Adrenal gland (tissue), 19 donors: ENCODE measurements at regions of chr7 and their contacts with region 1.

Region 1: DNA sequence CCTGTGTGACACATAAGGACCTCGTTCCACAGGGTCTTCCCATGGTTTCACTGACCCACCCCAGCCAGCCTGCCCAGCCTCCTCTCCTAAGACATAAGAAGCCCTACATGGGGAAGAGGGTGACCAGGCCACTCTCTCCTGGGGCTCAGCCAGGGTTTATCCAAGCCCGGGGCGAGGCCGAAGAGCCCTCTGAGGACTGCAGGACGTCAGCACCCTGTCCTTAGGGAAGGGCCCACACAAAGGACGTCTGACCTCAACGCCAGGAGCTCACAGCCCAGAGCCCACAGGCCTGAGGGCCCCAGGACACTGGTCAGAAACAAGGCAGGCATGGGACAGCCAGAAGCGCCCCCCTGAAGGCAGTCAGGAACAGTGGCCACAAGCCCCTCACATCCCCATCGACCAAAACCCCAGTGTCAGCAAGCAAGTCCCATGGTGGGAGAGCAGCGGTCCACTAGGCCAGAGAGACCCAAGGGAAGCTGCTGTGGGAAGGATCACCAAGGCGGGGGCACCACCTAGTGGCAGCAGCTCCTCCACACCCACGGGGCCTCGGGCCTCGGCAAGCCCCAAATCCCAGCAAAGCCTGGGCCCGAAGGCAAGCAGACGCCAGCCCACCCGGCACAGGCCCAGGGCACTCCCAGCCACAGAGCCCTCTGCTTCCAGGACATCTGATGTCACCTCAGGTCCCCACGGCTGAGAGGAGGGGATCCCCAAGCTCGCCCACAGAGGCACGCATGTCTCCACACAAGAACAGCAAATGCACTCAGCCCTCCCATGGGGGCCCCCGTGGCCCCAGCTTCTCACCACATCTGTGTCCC is 23.4 kb downstream of the MAD1L1 start:
- DNase-seq: peak; percentile 56 to 84 (median 74)
- H3K4me3 ChIP-seq: no peak overlapping the region
- H3K27ac ChIP-seq: no peak overlapping the region
- H3K4me1 ChIP-seq: no peaks in the 10 kb centered on the region
- H3K27me3 ChIP-seq: no peaks in the 10 kb centered on the region
- CTCF ChIP-seq: peak; percentile 42 to 84 (median 68)
- POLR2A ChIP-seq: no peak

Region 2: DNA sequence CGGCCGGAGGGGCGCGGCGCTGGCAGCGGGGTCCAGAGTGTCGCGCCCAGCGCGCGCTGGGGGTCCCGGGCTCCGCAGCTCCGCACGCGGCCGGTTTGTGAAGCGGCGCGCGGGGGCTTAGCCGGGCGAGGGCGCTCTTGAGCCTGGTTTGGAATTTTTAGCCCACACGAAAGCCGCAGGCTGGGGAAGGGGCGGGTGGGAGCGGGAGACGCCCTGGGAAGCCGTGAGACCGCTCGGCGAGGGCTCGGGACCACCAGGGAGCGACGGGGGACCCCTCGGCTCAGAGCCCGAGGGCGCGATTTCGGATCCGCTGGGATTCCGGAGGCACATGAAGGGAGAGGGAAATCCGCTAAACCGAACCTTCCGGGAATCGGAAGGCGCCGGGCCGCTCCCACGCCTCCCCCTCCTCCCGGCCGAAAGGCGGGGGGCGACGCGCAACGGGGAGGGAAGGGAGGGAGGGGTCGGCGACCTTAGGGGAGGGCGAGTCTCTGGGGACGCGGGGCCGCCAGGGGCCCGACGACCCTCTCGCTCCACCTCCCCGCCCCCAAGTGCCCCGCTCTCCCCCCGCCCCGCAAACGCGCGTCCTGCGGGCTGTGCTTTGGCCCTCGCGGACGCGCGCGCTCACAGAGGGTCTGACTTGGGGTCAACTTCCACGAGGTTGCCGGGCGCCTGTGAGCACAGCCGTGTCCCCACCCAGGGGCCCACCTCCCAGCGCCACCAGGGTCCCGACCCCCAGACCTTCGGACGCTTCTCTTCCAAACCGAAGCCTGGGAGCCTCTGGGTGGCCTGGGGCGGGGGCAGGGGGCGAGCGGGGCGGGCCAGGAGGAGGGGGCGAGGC is 544.4 kb before region 1 on chr7:
- intact Hi-C with region 1: loop called (anchors 2 to 10 kb)
- DNase-seq: peak in 6 of 7 donors; percentile 31 to 68 (median 60)
- H3K4me3 ChIP-seq: peak overlapping the region in 2 of 4 donors; percentile 33 to 68
- H3K27ac ChIP-seq: peak overlapping the region in 1 of 5 donors; percentile 40
- H3K4me1 ChIP-seq: peaks cover 21 to 29% of the 10 kb centered on the region in 2 donors
- H3K27me3 ChIP-seq: peaks cover 54% of the 10 kb centered on the region
- CTCF ChIP-seq: peak; percentile 25 to 68 (median 49)
- POLR2A ChIP-seq: no peak

Region 3: GRCh38 chr7:1669954-1670893 is 539.1 kb before region 1 on chr7 and contains the start of gene ELFN1:
- intact Hi-C with region 1: loop called (anchors 2 to 10 kb)
- DNase-seq: peak in 3 of 7 donors; percentile 6 to 21 (median 11)
- H3K4me3 ChIP-seq: peak within 1 kb of the TSS in 1 of 4 donors; percentile 34
- H3K27ac ChIP-seq: no peak within 1 kb of the TSS
- H3K4me1 ChIP-seq: peaks cover 21 to 24% of the 10 kb centered on the region in 2 donors
- H3K27me3 ChIP-seq: peaks cover 76% of the 10 kb centered on the region
- CTCF ChIP-seq: no peak
- POLR2A ChIP-seq: no peak
- total RNA-seq, gene ELFN1: 0.24 to 2.8 (median 0.92) TPM